Gastrocnemius medialis (tissue), 4 donors: ENCODE measurements at regions of chr2 and their contacts with region 1.

Region 1: GRCh38 chr2:23426263-23426905 is 41.4 kb downstream of the KLHL29 start:
- DNase-seq: peak; percentile 94 to 96
- ATAC-seq: peak; percentile 79
- H3K4me3 ChIP-seq: peak overlapping the region in 2 of 4 donors; percentile 14 to 29
- H3K27ac ChIP-seq: peak overlapping the region; percentile 80 to 97 (median 90)
- H3K4me1 ChIP-seq: peaks cover 30 to 43% of the 10 kb centered on the region in 2 donors
- H3K27me3 ChIP-seq: no peaks in the 10 kb centered on the region
- CTCF ChIP-seq: no peak
- POLR2A ChIP-seq: peak in 1 of 2 donors; percentile 10

Region 2: GRCh38 chr2:23330214-23330613 is 96.2 kb before region 1 on chr2:
- in situ Hi-C with region 1: no loop called
- intact Hi-C with region 1: no loop called
- DNase-seq: no peak
- ATAC-seq: no peak
- H3K4me3 ChIP-seq: no peak overlapping the region
- H3K27ac ChIP-seq: no peak overlapping the region
- H3K4me1 ChIP-seq: no peaks in the 10 kb centered on the region
- H3K27me3 ChIP-seq: no peaks in the 10 kb centered on the region
- CTCF ChIP-seq: no peak
- POLR2A ChIP-seq: no peak

Region 3: DNA sequence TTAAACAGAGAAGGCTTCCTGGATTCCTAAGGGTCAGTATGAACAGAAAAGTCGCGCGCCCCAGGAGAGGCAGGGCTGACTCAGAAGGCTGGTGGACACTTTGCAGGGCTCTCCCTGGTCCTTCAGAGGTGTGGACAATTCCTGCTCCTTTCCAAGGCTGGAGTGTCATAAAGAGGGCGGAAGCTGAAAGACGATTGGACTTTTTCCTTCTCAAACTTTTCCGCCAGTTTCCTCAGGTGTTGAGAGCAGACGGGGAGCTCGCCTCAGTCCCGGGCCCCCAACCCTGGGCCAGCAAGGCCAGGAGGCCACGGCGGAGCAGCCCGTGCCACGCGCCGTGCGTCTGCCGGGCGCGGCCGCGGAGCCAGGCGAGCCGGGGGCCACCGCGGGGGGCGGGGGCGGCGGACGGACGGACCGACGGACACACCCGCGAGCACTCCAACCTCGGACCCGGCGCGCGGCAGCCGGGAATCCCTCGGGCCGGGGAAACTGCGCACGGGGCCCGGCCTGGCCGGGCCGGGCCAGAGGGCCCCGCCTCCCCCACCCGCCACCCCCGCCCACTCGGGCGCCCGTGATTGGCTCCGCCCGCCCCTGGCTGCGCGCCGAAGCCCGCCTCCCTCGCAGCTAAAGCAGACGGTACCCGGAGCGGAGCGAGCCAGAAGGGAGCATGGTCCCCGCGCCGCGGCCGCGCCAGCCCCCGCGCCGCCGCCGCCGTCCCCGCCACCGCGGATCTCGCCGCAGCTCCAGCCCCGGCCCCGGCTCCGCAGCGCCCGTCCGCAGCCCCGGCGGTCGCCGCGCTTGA is 41.6 kb before region 1 on chr2 and contains the start of gene KLHL29:
- in situ Hi-C with region 1: no loop called
- intact Hi-C with region 1: loop called (anchors 2 kb)
- DNase-seq: peak; percentile 80 to 83
- ATAC-seq: peak; percentile 73 to 82
- H3K4me3 ChIP-seq: peak within 1 kb of the TSS; percentile 67 to 77 (median 74)
- H3K27ac ChIP-seq: peak within 1 kb of the TSS; percentile 62 to 73 (median 70)
- H3K4me1 ChIP-seq: peaks cover 7 to 22% of the 10 kb centered on the region in 2 donors
- H3K27me3 ChIP-seq: peaks cover 5 to 29% (median 14%) of the 10 kb centered on the region in 3 donors
- CTCF ChIP-seq: no peak
- POLR2A ChIP-seq: peak; percentile 72 to 73
- total RNA-seq, gene KLHL29: 4.3 to 24.9 (median 8.7) TPM

Region 4: DNA sequence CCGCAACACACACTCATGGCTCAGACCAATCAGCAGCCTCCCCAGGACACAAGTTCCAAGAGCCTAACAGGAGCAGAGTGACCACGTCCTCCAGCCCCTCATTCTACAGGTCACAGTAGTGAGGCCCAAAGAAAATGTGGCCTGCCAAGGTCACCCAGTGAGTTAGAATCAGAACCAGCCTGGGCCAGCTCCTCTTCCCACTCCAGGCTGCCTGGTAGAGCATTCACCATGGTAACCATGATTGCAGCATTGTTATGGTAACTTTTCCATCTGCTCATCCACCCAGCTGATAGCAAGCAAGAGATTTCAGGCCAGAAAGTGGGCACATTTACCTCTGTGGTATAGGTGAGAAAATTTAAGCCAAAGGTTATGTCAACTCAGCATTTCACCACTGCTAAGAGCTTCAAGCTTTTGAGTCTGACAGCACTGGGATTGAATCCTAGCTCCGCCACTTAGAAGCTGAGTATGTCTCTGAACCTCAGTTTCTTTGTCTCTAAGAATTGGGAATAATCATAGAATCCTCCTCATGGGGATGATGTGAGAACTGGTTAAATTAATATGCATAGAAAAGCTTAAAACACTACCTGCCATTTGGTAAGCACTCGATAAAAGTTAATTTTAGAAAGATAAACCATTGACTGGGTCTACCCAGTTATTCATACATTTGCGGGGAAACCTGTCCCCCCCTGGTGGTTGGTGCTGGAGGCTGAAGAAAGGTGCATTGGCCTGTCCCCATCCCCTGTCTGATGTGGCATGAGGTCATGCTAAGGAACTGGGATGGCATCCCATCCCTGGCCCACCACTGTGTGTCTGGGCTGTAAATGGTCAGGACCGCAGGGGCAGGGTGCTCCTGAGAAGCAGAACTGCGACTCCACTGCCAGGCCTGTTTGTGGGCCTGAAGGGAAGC is 140.1 kb after region 1 on chr2:
- in situ Hi-C with region 1: no loop called
- intact Hi-C with region 1: loop called (anchors 1 kb)
- DNase-seq: no peak
- ATAC-seq: no peak
- H3K4me3 ChIP-seq: no peak overlapping the region
- H3K27ac ChIP-seq: peak overlapping the region; percentile 85 to 93 (median 89)
- H3K4me1 ChIP-seq: peaks cover 41 to 63% of the 10 kb centered on the region in 2 donors
- H3K27me3 ChIP-seq: no peaks in the 10 kb centered on the region
- CTCF ChIP-seq: peak in 3 of 5 experiments; percentile 23 to 45 (median 44)
- POLR2A ChIP-seq: no peak

Region 5: GRCh38 chr2:23595601-23596251 is 169.3 kb after region 1 on chr2:
- in situ Hi-C with region 1: no loop called
- intact Hi-C with region 1: loop called (anchors 5 kb)
- DNase-seq: peak in 1 of 2 donors; percentile 79
- ATAC-seq: peak; percentile 48 to 64
- H3K4me3 ChIP-seq: peak overlapping the region; percentile 34 to 58 (median 47)
- H3K27ac ChIP-seq: peak overlapping the region; percentile 83 to 93 (median 88)
- H3K4me1 ChIP-seq: peaks cover 40 to 78% of the 10 kb centered on the region in 2 donors
- H3K27me3 ChIP-seq: no peaks in the 10 kb centered on the region
- CTCF ChIP-seq: peak in 1 of 5 experiments; percentile 34
- POLR2A ChIP-seq: no peak

Region 6: GRCh38 chr2:23745726-23746105 is 319.3 kb after region 1 on chr2:
- in situ Hi-C with region 1: loop called in 1 of 4 experiments (anchors 10 kb)
- intact Hi-C with region 1: loop called (anchors 2 kb)
- DNase-seq: peak; percentile 84 to 90
- ATAC-seq: peak; percentile 97 to 98
- H3K4me3 ChIP-seq: peak overlapping the region in 2 of 4 donors; percentile 26 to 41
- H3K27ac ChIP-seq: peak overlapping the region; percentile 88 to 94 (median 90)
- H3K4me1 ChIP-seq: peaks cover 22 to 25% of the 10 kb centered on the region in 2 donors
- H3K27me3 ChIP-seq: no peaks in the 10 kb centered on the region
- CTCF ChIP-seq: no peak
- POLR2A ChIP-seq: no peak